ENCODE measurements at regions of chr9 and their contacts with region 1.

Region 1: GRCh38 chr9:38277601-38278200 is 114.8 kb upstream of the ALDH1B1 start:
- DNase-seq: no peak
- ATAC-seq: no peak
- H3K4me3 ChIP-seq: no peak overlapping the region
- H3K27ac ChIP-seq: no peak overlapping the region
- H3K4me1 ChIP-seq: no peaks in the 10 kb centered on the region
- H3K27me3 ChIP-seq: no peaks in the 10 kb centered on the region
- CTCF ChIP-seq: no peak
- POLR2A ChIP-seq: no peak

Region 2: GRCh38 chr9:38214432-38214831 is 63.3 kb before region 1 on chr9:
- in situ Hi-C with region 1: loop called in 1 of 4 experiments (anchors 10 kb)
- intact Hi-C with region 1: no loop called
- DNase-seq: no peak
- ATAC-seq: no peak
- H3K4me3 ChIP-seq: no peak overlapping the region
- H3K27ac ChIP-seq: no peak overlapping the region
- H3K4me1 ChIP-seq: no peaks in the 10 kb centered on the region
- H3K27me3 ChIP-seq: no peaks in the 10 kb centered on the region
- CTCF ChIP-seq: no peak
- POLR2A ChIP-seq: no peak